K562 (cell line): ENCODE measurements at regions of chr6 and their contacts with region 1.

Region 1: GRCh38 chr6:27687154-27688013 is 214.5 kb upstream of the ZNF184 start:
- DNase-seq: peak; percentile 78 to 97 (median 82)
- ATAC-seq: peak; percentile 89
- H3K4me3 ChIP-seq: peak overlapping the region; percentile 63
- H3K27ac ChIP-seq: peak overlapping the region; percentile 78
- H3K4me1 ChIP-seq: peaks cover 5 to 24% of the 10 kb centered on the region in 2 experiments; a peak in 4 of 5 replicates
- H3K27me3 ChIP-seq: no peaks in the 10 kb centered on the region
- CTCF ChIP-seq: peak; percentile 92 to 96 (median 95)
- EP300 ChIP-seq: 0 out of 2 replicates have a peak, but pooled peaks have one; percentile 14
- POLR2A ChIP-seq: no peak
- RAD21 ChIP-seq: peak; percentile 71 to 87

Region 2: GRCh38 chr6:27177485-27178406 is 509.6 kb before region 1 on chr6:
- CTCF ChIA-PET with region 1: interaction called, 5 read pairs
- POLR2A ChIA-PET with region 1: no interaction called
- in situ Hi-C with region 1: loop called (anchors 5 kb)
- intact Hi-C with region 1: no loop called
- DNase-seq: peak; percentile 48 to 73 (median 60)
- ATAC-seq: peak; percentile 59
- H3K4me3 ChIP-seq: peak overlapping the region; percentile 74
- H3K27ac ChIP-seq: peak overlapping the region; percentile 73
- H3K4me1 ChIP-seq: peaks cover 20 to 29% of the 10 kb centered on the region in 2 experiments; a peak in 4 of 5 replicates
- H3K27me3 ChIP-seq: no peaks in the 10 kb centered on the region
- CTCF ChIP-seq: peak; percentile 39 to 52 (median 47); a peak in 3 of 6 replicates
- EP300 ChIP-seq: no peak
- POLR2A ChIP-seq: no peak
- RAD21 ChIP-seq: 0 out of 4 replicates have a peak, but pooled peaks of 1 of the 2 experiments have one; percentile 39

Region 3: GRCh38 chr6:27460701-27461100 is 226.7 kb before region 1 on chr6:
- CTCF ChIA-PET with region 1: no interaction called
- POLR2A ChIA-PET with region 1: no interaction called
- in situ Hi-C with region 1: no loop called
- intact Hi-C with region 1: no loop called
- DNase-seq: no peak
- ATAC-seq: no peak
- H3K4me3 ChIP-seq: no peak overlapping the region
- H3K27ac ChIP-seq: no peak overlapping the region
- H3K4me1 ChIP-seq: no peaks in the 10 kb centered on the region
- H3K27me3 ChIP-seq: no peaks in the 10 kb centered on the region
- CTCF ChIP-seq: no peak
- EP300 ChIP-seq: no peak
- POLR2A ChIP-seq: no peak
- RAD21 ChIP-seq: no peak

Region 4: GRCh38 chr6:27630727-27631608 is 56.4 kb before region 1 on chr6:
- CTCF ChIA-PET with region 1: no interaction called
- POLR2A ChIA-PET with region 1: interaction called, 6 read pairs
- in situ Hi-C with region 1: no loop called
- intact Hi-C with region 1: loop called (anchors 5 kb)
- DNase-seq: peak; percentile 79 to 94 (median 83)
- ATAC-seq: peak; percentile 99
- H3K4me3 ChIP-seq: peak overlapping the region; percentile 57
- H3K27ac ChIP-seq: peak overlapping the region; percentile 71
- H3K4me1 ChIP-seq: peaks cover 8 to 10% of the 10 kb centered on the region in 2 experiments; a peak in 4 of 5 replicates
- H3K27me3 ChIP-seq: no peaks in the 10 kb centered on the region
- CTCF ChIP-seq: peak; percentile 55 to 64 (median 63); a peak in 5 of 6 replicates
- EP300 ChIP-seq: peak; percentile 76
- POLR2A ChIP-seq: no peak
- RAD21 ChIP-seq: 0 out of 4 replicates have a peak, but pooled peaks have one; percentile 2 to 14